ENCODE measurements at regions of chr19 and their contacts with region 1.

Region 1: DNA sequence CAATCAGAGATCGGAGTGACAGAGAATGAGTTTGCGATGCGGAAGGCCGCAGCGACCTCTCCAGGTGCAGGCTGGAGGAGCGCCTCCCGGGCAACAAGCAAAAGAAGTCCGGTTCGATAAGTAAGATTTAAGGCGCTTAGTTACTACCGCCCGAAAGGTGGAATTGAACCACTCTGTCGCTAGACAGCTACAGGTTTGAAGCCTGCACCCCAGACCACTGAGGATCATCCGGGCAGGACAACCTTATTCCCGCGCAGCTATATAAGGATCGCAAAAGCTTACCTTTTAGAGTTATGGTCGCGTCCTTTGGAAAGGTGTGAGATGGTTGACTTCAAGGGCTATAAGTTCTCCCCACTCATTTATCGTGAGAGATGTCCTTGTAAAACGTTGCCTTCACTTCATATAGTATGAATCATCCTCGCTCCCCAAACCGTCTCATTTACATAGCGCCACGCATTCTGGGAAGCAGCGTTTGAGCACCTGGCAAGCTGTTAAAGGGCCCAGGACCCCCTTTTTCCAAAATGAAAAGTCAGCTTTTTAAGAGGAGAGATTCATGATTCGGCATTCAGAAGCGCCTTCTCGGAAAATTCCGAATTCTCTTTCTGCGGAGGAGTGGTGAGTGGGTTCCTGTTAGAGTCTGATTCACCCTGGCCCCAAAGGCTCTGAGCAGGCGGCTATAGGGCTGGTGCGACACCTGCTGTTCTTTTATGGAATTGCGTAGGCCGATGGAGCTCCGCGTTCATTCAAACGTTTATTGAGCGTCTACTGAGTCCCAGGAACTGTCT is 10.8 kb downstream of the FOSB start:
- DNase-seq: peak; percentile 95
- H3K4me3 ChIP-seq: peak overlapping the region; percentile 51
- H3K27ac ChIP-seq: peak overlapping the region; percentile 95
- H3K4me1 ChIP-seq: peaks cover 5% of the 10 kb centered on the region
- H3K27me3 ChIP-seq: no peaks in the 10 kb centered on the region
- CTCF ChIP-seq: peak; percentile 96

Region 2: DNA sequence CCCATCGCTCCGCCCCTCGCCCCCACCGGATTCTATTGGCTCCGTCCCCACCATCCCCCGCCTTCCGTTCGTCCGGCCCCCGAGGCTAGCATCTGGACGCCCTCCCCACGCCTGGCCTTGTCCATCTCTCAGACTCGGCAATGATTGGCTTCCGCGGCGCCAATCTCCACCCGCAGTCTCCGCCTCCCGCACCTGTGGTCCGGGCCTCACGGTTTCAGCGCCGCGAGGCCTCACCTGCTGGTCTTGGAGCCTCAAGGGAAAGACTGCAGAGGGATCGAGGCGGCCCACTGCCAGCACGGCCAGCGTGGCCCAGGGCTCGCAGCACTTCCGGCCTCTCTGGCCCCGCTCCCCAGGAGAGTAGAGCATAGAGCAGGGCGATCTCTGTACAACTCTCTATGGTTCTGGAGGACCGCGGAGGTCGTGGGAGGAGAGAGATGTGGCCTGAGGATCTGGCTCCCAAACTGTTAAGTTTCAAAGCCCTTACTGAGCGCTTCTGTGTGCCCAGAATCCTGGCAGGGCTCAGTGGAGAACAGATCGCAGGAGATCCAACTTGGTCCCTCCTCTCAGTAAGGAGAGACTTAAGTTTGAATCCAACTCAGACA is 55.0 kb before region 1 on chr19 and contains the start of gene ERCC1:
- CTCF ChIA-PET with region 1: interaction called, 13 read pairs
- POLR2A ChIA-PET with region 1: interaction called, 6 read pairs
- intact Hi-C with region 1: loop called (anchors 1 kb)
- DNase-seq: peak; percentile 97
- H3K4me3 ChIP-seq: peak within 1 kb of the TSS; percentile 63
- H3K27ac ChIP-seq: peak within 1 kb of the TSS; percentile 89
- H3K4me1 ChIP-seq: peaks cover 16% of the 10 kb centered on the region
- H3K27me3 ChIP-seq: no peaks in the 10 kb centered on the region
- CTCF ChIP-seq: no peak
- total RNA-seq, gene ERCC1: 158 and 165 TPM in 2 replicates